Activated CD8-positive, alpha-beta memory T cell treated with anti-CD3 and anti-CD28 coated beads, Interleukin-2, amount 10 ng/mL, durations not matched to agents 7 days and 5 days (primary cell): ENCODE measurements at regions of chr14 and their contacts with region 1.

Region 1: DNA sequence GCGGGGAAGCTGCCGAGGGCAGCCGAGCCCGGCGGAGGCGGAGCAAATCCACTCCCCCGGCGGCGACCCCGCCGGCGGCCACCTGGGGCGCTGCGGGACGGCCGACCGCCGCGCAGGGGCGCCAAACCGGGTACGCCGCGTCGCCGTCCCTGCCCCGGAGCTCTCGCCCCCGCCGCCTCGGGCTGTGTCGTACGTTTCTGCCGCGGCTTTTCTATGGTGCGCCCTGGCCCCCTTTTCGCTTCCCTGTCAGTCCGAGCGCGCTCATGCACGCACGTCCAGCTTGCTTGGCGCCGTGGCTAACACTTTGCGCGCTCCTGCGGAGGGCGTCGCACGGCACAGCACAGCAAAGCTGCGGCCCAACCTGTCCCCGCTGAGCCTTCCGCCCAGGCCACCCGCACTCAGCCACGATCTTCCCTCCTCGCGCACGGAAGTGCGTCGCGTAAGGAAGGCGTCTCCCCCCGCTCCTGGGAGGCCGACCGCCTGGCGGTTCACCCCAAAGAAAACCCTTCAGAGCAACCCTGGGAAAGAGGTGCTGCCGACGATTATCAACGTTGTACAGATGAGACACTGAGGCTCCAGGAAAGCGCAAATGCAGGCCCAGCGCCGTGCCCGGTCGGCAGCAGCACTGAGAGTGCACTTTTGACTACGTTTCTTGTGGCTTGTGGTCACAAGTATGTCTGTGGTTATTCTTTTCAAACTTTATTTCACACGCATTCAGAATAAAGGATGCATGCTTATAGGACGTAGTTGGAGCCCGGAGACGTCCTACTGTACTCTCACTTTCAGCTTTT is at the start of gene HECTD1:
- DNase-seq: peak; percentile 90
- ATAC-seq: peak; percentile 77
- H3K4me3 Mint-ChIP-seq: peak within 1 kb of the TSS; percentile 82
- H3K27ac Mint-ChIP-seq: peak within 1 kb of the TSS; percentile 99
- H3K4me1 Mint-ChIP-seq: peaks cover 34% of the 10 kb centered on the region
- H3K27me3 Mint-ChIP-seq: no peaks in the 10 kb centered on the region
- total RNA-seq, gene HECTD1: 91.0 to 105 TPM

Region 2: DNA sequence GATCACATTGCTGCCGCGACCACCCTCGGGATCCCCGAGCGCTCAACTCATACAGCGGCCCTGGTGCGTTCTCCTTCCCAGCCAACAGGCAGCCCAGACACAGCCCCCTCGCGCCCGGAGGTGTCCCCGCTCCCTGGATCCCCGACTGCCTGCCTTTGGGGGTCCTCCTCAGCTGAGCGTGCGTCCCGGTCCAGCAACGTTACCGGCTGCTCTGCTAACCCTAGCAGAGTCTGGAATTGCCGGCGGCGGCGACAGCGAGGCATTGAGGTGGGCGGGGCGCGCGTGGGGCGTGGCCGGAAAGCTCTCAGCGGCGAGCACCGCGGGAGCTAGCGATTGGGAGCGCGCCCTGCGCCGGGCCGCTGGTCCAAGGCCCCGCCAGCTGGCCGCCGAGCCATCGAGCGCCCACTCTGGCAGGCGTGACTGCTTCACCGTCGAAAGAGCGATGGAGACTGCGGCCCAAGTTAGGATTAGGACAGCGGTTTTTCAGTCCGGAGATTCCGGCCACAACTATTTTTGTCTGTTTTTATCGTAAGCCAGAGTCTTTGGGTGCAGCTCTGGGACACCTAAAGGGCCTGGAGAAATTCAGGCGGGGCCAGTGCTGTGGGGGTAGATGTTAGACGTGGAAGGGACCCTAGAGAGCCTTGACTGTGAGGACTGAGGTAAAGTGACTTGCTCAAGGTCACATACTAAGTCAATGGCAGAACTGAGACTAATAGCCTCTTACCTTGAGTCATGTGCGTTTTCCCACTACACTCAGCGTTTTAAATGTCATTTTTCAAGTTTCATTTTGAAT is 212.6 kb after region 1 on chr14 and contains the start of gene HEATR5A:
- CTCF ChIA-PET with region 1: interaction called, 10 read pairs
- DNase-seq: peak; percentile 94
- ATAC-seq: peak; percentile 98
- H3K4me3 Mint-ChIP-seq: peak within 1 kb of the TSS; percentile 93
- H3K27ac Mint-ChIP-seq: peak within 1 kb of the TSS; percentile 89
- H3K4me1 Mint-ChIP-seq: peaks cover 21% of the 10 kb centered on the region
- H3K27me3 Mint-ChIP-seq: peaks cover 3% of the 10 kb centered on the region
- total RNA-seq, gene HEATR5A: 8.4 to 18.7 TPM